ENCODE measurements at regions of chr14 and their contacts with region 1.

Region 1: GRCh38 chr14:87745507-87746118 is 247.4 kb downstream of the GALC start:
- DNase-seq: peak; percentile 35
- ATAC-seq: peak; percentile 42
- H3K4me3 Mint-ChIP-seq: no peak overlapping the region
- H3K27ac Mint-ChIP-seq: no peak overlapping the region
- H3K4me1 Mint-ChIP-seq: no peaks in the 10 kb centered on the region
- H3K27me3 Mint-ChIP-seq: peaks cover 8% of the 10 kb centered on the region
- CTCF ChIP-seq: peak; percentile 69

Region 2: GRCh38 chr14:87732562-87732961 is 13.1 kb before region 1 on chr14:
- CTCF ChIA-PET with region 1: interaction called, 19 read pairs
- POLR2A ChIA-PET with region 1: no interaction called
- intact Hi-C with region 1: no loop called
- DNase-seq: no peak
- ATAC-seq: no peak
- H3K4me3 Mint-ChIP-seq: no peak overlapping the region
- H3K27ac Mint-ChIP-seq: no peak overlapping the region
- H3K4me1 Mint-ChIP-seq: no peaks in the 10 kb centered on the region
- H3K27me3 Mint-ChIP-seq: no peaks in the 10 kb centered on the region
- CTCF ChIP-seq: no peak

Region 3: GRCh38 chr14:87896393-87897380 is 151.1 kb after region 1 on chr14:
- CTCF ChIA-PET with region 1: interaction called, 21 read pairs
- POLR2A ChIA-PET with region 1: no interaction called
- intact Hi-C with region 1: loop called (anchors 2 kb)
- DNase-seq: peak; percentile 4
- ATAC-seq: no peak
- H3K4me3 Mint-ChIP-seq: no peak overlapping the region
- H3K27ac Mint-ChIP-seq: no peak overlapping the region
- H3K4me1 Mint-ChIP-seq: no peaks in the 10 kb centered on the region
- H3K27me3 Mint-ChIP-seq: peaks cover 14% of the 10 kb centered on the region
- CTCF ChIP-seq: peak; percentile 85

Measured in activated CD8-positive, alpha-beta T cell treated with anti-CD3 and anti-CD28 coated beads for 36 hours (primary cell).